ENCODE measurements at regions of chr15 and their contacts with region 1.

Region 1: DNA sequence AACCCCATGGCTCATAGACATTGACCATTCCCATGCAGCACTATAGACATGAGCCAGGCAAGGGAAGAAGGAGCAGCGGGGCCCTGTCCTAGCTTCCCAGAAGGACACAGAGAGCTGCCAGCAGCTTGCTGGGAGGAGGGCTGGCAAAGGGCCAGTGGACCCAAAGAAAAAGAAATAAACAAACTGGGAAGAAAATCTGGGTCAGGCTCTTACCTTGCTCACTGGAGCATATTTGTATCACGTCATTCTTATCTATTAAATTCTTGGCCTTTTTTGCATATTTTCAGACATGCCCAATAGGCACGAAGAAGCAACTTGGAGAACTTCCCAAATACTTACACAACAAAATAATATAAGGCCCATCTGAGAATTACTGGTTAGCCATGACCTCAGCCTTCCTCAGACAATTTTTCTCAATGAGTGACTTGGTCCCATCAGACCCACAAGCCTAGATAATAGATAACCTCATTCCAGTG is 28.4 kb downstream of the RASGRP1 start:
- DNase-seq: no peak
- H3K4me3 Mint-ChIP-seq: no peak overlapping the region
- H3K27ac Mint-ChIP-seq: peak overlapping the region; percentile 78
- H3K4me1 Mint-ChIP-seq: peaks cover 90% of the 10 kb centered on the region
- H3K27me3 Mint-ChIP-seq: no peaks in the 10 kb centered on the region

Region 2: GRCh38 chr15:38226608-38227266 is 309.5 kb before region 1 on chr15:
- intact Hi-C with region 1: no loop called
- DNase-seq: no peak
- H3K4me3 Mint-ChIP-seq: no peak overlapping the region
- H3K27ac Mint-ChIP-seq: no peak overlapping the region
- H3K4me1 Mint-ChIP-seq: no peaks in the 10 kb centered on the region
- H3K27me3 Mint-ChIP-seq: peaks cover 4% of the 10 kb centered on the region

Region 3: DNA sequence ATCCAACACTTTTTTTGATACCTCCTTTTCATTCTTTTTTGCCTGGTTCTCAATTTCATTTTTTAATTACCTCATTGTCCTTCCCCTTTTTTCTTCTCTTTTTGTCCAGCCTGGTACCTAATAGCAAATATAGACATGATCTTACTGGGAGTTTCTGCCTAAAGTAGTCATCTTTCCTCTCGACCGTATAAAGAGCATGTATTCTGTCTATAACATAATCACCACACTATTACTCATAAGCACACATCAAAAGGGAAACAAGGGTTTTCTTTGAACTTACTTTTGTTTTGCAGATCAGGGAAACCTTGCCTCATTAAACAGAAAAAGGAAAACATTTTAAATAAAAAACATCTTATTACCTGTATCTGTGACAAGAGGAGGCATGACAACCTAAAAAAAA is 49.3 kb before region 1 on chr15:
- intact Hi-C with region 1: loop called (anchors 2 kb)
- DNase-seq: no peak
- H3K4me3 Mint-ChIP-seq: no peak overlapping the region
- H3K27ac Mint-ChIP-seq: peak overlapping the region; percentile 88
- H3K4me1 Mint-ChIP-seq: peaks cover 38% of the 10 kb centered on the region
- H3K27me3 Mint-ChIP-seq: no peaks in the 10 kb centered on the region

Region 4: DNA sequence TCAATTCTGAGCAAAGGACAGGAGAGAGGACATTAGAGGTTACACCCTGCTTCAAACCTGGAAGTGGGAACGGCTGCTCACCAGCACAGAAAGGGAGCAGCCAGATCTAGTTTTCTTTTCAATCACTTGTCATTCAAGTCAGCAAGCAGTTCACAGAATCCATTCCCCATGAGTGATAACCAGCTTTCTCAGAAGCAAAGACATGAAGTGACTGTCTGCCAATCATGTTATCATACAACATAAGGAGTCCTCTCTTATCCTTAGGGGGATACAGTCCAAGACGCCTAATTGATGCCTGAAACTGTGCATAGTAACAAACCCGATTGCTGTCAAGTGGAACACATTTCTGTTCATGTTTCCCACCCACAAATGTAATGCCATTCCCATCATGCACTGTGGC is 27.6 kb before region 1 on chr15:
- intact Hi-C with region 1: loop called (anchors 5 kb)
- DNase-seq: no peak
- H3K4me3 Mint-ChIP-seq: no peak overlapping the region
- H3K27ac Mint-ChIP-seq: peak overlapping the region; percentile 73
- H3K4me1 Mint-ChIP-seq: peaks cover 40% of the 10 kb centered on the region
- H3K27me3 Mint-ChIP-seq: no peaks in the 10 kb centered on the region

Region 5: DNA sequence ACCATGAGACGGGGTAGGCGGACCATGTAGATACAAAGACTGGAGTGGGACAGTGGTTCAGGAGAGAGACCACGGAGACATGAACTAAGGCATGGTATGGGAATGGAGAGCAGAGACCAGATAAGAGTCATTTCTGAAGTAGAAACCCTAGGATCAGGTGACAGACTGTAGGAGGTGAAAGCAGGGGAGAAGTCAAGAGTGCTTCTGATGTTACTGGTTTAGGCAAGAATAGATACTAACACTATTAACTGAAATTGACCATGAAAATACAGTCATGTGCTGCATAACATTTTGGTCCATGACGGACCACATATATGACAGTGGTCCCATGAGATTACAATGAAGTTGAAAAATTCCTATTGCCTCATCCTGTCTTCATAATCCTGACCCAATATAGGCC is 13.3 kb before region 1 on chr15:
- intact Hi-C with region 1: loop called (anchors 2 kb)
- DNase-seq: no peak
- H3K4me3 Mint-ChIP-seq: no peak overlapping the region
- H3K27ac Mint-ChIP-seq: peak overlapping the region; percentile 55
- H3K4me1 Mint-ChIP-seq: peaks cover 54% of the 10 kb centered on the region
- H3K27me3 Mint-ChIP-seq: no peaks in the 10 kb centered on the region

Region 6: DNA sequence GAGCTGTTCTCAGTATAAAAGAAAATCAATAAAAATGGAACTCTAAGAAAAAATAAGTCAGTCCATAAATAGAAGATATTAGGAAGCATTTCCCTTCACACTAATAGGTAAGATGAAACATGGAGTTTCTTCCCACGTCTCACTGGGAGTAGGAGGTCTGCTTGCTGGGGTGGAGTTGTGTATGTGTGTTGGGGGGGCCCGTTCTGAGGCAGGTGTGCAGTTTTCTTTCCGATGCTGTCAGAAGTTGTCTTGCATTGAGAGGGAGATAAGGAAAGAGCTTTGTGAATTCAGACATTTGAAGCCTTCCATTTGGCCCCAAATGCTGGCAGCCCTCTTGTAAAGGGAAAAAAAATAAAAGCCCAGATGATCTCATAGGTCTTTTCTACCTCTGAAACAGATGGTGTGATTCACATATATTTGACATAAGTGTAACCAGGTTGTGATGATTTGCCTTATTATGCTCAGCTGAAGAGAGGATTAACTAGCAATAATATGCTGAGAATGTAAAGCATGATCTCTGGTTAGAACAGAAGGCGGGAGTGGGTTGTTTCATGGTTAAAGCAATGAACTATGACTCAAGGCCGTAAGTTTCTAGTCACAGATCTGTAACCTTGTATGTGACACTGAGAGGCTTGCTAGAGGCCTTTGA is 19.6 kb after region 1 on chr15:
- intact Hi-C with region 1: loop called (anchors 1 kb)
- DNase-seq: no peak
- H3K4me3 Mint-ChIP-seq: peak overlapping the region; percentile 66
- H3K27ac Mint-ChIP-seq: peak overlapping the region; percentile 98
- H3K4me1 Mint-ChIP-seq: peaks cover 95% of the 10 kb centered on the region
- H3K27me3 Mint-ChIP-seq: no peaks in the 10 kb centered on the region